A549 (cell line): ENCODE measurements at regions of chr2 and their contacts with region 1.

Region 1: GRCh38 chr2:46876741-46877384 is 38.7 kb downstream of the MCFD2 start:
- DNase-seq: peak; percentile 82 to 91
- ATAC-seq: peak; percentile 55 to 67
- H3K4me3 ChIP-seq: no peak overlapping the region
- H3K27ac ChIP-seq: peak overlapping the region; percentile 87 to 91
- H3K4me1 ChIP-seq: peaks cover 82% of the 10 kb centered on the region
- CTCF ChIP-seq: peak; percentile 85
- EP300 ChIP-seq: no peak
- POLR2A ChIP-seq: no peak
- RAD21 ChIP-seq: peak; percentile 91 to 95

Region 2: GRCh38 chr2:46650556-46651001 is 226.3 kb before region 1 on chr2:
- CTCF ChIA-PET with region 1: interaction called, 14 read pairs
- POLR2A ChIA-PET with region 1: no interaction called
- DNase-seq: peak; percentile 57 to 93
- ATAC-seq: peak; percentile 40 to 58; a peak in 3 of 6 replicates
- H3K4me3 ChIP-seq: no peak overlapping the region
- H3K27ac ChIP-seq: peak overlapping the region; percentile 94 to 97
- H3K4me1 ChIP-seq: peaks cover 69% of the 10 kb centered on the region
- CTCF ChIP-seq: peak; percentile 99
- EP300 ChIP-seq: no peak
- POLR2A ChIP-seq: no peak
- RAD21 ChIP-seq: peak; percentile 99 to 100

Region 3: DNA sequence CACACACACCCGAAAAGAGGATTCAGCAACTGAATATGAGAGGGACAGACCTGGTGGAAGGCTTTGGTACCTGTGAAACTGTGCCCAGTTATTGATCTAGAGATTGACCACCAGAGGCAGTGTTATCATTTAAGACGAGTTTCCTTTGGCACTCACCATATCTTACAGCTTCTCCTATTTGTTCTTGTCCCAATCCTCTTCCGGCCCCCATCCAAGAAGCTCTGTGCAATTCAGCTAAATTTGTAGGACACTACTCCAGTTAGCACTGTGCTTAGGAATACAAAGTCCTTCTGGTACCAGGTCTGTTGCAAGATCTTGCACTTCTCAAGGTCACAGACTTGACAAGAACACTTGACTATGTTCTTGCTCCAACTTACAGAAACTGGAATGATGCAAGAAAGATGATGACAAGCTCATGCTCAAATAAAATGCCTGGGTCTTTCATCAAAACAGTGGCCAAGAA is 219.8 kb before region 1 on chr2:
- CTCF ChIA-PET with region 1: interaction called, 14 read pairs
- POLR2A ChIA-PET with region 1: no interaction called
- DNase-seq: peak; percentile 62 to 73
- ATAC-seq: peak; percentile 81 to 85
- H3K4me3 ChIP-seq: no peak overlapping the region
- H3K27ac ChIP-seq: peak overlapping the region; percentile 94 to 97
- H3K4me1 ChIP-seq: peaks cover 36% of the 10 kb centered on the region
- CTCF ChIP-seq: peak; percentile 66
- EP300 ChIP-seq: no peak
- POLR2A ChIP-seq: no peak
- RAD21 ChIP-seq: peak; percentile 75

Region 4: GRCh38 chr2:46776687-46777327 is 100.1 kb before region 1 on chr2:
- CTCF ChIA-PET with region 1: interaction called, 12 read pairs
- POLR2A ChIA-PET with region 1: no interaction called
- DNase-seq: peak; percentile 73 to 76
- ATAC-seq: peak; percentile 48 to 69; a peak in 3 of 6 replicates
- H3K4me3 ChIP-seq: no peak overlapping the region
- H3K27ac ChIP-seq: peak overlapping the region; percentile 15 to 76; a peak in 4 of 6 replicates
- H3K4me1 ChIP-seq: peaks cover 62% of the 10 kb centered on the region
- CTCF ChIP-seq: peak; percentile 85
- EP300 ChIP-seq: no peak
- POLR2A ChIP-seq: no peak
- RAD21 ChIP-seq: peak; percentile 73 to 82

Region 5: GRCh38 chr2:46857893-46858701 is 18.8 kb before region 1 on chr2:
- CTCF ChIA-PET with region 1: interaction called, 24 read pairs
- POLR2A ChIA-PET with region 1: no interaction called
- DNase-seq: peak in 1 of 2 experiments; percentile 57
- ATAC-seq: no peak
- H3K4me3 ChIP-seq: no peak overlapping the region
- H3K27ac ChIP-seq: peak overlapping the region; percentile 97 to 99
- H3K4me1 ChIP-seq: peaks cover 53% of the 10 kb centered on the region
- CTCF ChIP-seq: no peak
- EP300 ChIP-seq: no peak
- POLR2A ChIP-seq: no peak
- RAD21 ChIP-seq: no peak

Region 6: DNA sequence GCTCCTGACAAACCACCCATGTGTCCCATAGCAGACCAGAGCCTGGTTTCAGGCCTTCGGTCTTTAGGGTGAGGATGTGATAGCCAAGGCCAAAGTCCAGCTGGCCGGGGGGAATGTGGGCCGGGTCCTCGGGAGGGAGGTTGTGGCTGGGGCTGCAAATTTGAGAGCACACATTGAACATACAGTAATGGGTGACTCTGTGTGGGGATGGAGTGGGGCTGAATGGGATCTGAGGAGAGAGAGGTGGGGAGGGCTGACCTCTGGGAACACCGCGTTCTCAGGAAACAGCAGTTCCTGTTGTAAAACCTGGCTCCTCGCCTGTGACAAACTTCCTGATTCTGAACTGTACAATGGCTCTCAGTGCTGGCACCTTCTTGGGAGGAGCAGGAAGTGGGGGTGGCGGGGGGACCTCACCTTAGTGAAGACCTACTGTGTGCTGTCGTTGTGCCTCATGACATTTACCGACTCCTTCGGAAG is 10.1 kb before region 1 on chr2:
- CTCF ChIA-PET with region 1: interaction called, 20 read pairs
- POLR2A ChIA-PET with region 1: no interaction called
- DNase-seq: no peak
- ATAC-seq: no peak
- H3K4me3 ChIP-seq: no peak overlapping the region
- H3K27ac ChIP-seq: peak overlapping the region; percentile 91 to 97
- H3K4me1 ChIP-seq: peaks cover 20% of the 10 kb centered on the region
- CTCF ChIP-seq: no peak
- EP300 ChIP-seq: no peak
- POLR2A ChIP-seq: no peak
- RAD21 ChIP-seq: no peak

Region 7: DNA sequence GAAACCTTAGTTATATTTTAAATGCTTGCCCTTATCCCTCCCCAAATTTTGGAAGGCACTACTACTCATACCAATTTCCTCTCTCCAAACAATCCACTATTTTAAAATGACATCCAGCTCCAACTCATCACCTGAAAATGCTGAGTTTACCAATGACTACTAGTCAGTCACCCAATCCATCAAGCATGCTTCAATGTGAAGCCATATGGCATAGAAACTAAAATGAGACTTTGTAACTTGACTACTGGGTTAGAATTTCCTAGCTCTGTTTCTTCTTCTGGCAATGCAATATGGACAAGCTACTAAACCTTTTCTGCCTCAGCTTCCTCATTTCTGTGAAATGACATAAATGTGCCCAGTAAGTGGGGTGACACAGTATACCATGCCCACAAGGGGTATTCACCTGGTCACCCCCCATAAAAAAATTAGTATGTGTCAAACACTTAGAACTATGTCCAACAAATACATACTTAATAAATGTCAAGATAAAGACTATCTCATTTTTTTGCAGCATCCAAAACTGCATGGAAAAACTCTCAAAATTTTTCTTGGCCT is 288.2 kb after region 1 on chr2:
- CTCF ChIA-PET with region 1: no interaction called
- POLR2A ChIA-PET with region 1: no interaction called
- DNase-seq: no peak
- ATAC-seq: no peak
- H3K4me3 ChIP-seq: no peak overlapping the region
- H3K27ac ChIP-seq: no peak overlapping the region
- H3K4me1 ChIP-seq: peaks cover 91% of the 10 kb centered on the region
- CTCF ChIP-seq: no peak
- EP300 ChIP-seq: no peak
- POLR2A ChIP-seq: no peak
- RAD21 ChIP-seq: no peak